Mammary epithelial cell (primary cell): ENCODE measurements at regions of chr4 and their contacts with region 1.

Region 1: GRCh38 chr4:1809754-1810511 is 16.8 kb downstream of the FGFR3 start:
- DNase-seq: peak; percentile 37
- H3K4me3 ChIP-seq: no peak overlapping the region
- H3K27ac ChIP-seq: no peak overlapping the region
- H3K4me1 ChIP-seq: no peaks in the 10 kb centered on the region
- H3K27me3 ChIP-seq: no peaks in the 10 kb centered on the region
- CTCF ChIP-seq: peak; percentile 67 to 86

Region 2: DNA sequence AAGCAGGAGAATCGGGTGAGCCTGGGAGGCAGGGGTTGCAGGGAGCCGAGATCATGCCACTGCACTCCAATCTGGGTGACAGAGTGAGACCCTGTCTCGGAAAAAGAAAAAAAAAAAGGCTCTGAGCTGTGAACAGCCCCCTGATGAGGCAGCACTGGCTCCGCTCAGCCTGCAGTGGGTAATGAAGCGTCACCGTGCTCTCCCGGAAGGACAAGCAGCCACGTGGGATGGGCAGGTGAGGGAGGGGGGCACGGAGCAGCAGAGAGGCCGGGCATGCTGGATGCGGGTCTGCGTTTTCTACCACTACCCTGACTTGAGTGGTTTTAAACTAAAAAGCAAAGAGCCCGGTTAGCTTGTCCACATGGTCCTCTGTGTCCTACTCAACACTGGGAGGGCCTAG is 73.1 kb before region 1 on chr4:
- CTCF ChIA-PET with region 1: no interaction called
- dilution Hi-C with region 1: loop called (anchors 5 kb)
- in situ Hi-C with region 1: loop called (anchors 5 to 10 kb)
- intact Hi-C with region 1: no loop called
- DNase-seq: no peak
- H3K4me3 ChIP-seq: no peak overlapping the region
- H3K27ac ChIP-seq: no peak overlapping the region
- H3K4me1 ChIP-seq: no peaks in the 10 kb centered on the region
- H3K27me3 ChIP-seq: no peaks in the 10 kb centered on the region
- CTCF ChIP-seq: no peak

Region 3: DNA sequence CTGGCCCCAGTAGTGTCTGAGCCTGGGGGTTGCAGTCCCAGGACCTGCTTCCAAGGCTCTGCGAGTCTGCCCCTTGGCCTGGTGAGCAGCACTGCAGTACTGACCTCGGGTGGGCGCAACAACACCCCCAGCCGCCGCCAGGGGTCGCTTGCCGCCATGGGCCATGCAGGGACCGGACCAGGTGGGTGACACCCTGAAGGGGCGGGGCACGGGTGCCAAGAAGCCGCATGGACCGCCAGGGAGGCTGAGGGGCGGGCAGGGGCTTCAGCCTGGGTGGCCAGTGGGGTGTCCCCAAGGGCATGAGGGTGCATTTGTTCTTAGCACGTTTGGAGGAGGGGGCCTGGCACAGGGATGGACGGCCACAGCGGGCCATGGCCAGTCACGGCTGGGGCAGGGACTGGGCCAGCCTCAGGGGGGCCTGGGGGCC is 63.7 kb before region 1 on chr4:
- CTCF ChIA-PET with region 1: no interaction called
- dilution Hi-C with region 1: no loop called
- in situ Hi-C with region 1: loop called (anchors 5 to 10 kb)
- intact Hi-C with region 1: loop called (anchors 1 kb)
- DNase-seq: no peak
- H3K4me3 ChIP-seq: no peak overlapping the region
- H3K27ac ChIP-seq: no peak overlapping the region
- H3K4me1 ChIP-seq: peaks cover under 1% of the 10 kb centered on the region
- H3K27me3 ChIP-seq: no peaks in the 10 kb centered on the region
- CTCF ChIP-seq: peak; percentile 77 to 85